GM18951 (cell line): ENCODE measurements at regions of chr16 and their contacts with region 1.

Region 1: GRCh38 chr16:68719993-68720489 is 17.1 kb upstream of the CDH1 start:
- POLR2A ChIP-seq: no peak

Region 2: DNA sequence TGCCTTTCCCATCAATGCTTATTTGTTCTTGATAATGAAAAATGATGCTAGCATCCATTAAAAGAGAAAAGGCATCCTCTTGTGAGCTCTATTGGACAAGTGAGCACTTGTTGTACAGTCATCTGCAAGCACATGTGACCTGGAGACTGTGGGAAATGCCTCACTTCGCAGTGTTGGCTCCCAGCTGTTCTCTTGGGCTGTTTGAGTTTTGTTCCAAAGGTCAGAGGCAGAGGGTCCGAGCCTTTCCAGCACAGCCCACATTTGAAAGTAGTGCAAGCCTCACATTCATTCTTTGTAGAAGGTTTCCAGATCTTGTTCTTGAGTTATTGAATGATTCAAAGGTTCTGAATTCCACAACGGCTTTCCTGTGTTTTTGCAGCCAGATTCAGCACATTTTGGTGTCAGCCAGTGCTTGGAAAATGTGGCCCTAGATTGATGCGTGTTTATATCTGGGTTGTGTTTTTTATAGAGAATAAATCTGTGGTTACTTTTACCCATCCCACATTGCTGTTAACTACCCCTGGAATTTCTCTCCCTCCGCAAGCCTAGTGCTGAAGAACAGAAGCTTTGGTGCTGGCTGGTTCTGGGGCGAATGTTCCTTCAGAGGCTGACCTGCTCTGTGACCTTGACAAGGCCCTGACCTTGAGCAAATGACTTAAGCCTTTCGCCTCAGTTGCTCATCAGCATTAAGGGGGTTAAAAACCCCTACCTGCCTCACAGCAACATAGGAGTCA is 66.8 kb after region 1 on chr16:
- in situ Hi-C with region 1: loop called (anchors 5 kb)
- POLR2A ChIP-seq: no peak